Astrocyte of the cerebellum (primary cell): ENCODE measurements at regions of chr11 and their contacts with region 1.

Region 1: DNA sequence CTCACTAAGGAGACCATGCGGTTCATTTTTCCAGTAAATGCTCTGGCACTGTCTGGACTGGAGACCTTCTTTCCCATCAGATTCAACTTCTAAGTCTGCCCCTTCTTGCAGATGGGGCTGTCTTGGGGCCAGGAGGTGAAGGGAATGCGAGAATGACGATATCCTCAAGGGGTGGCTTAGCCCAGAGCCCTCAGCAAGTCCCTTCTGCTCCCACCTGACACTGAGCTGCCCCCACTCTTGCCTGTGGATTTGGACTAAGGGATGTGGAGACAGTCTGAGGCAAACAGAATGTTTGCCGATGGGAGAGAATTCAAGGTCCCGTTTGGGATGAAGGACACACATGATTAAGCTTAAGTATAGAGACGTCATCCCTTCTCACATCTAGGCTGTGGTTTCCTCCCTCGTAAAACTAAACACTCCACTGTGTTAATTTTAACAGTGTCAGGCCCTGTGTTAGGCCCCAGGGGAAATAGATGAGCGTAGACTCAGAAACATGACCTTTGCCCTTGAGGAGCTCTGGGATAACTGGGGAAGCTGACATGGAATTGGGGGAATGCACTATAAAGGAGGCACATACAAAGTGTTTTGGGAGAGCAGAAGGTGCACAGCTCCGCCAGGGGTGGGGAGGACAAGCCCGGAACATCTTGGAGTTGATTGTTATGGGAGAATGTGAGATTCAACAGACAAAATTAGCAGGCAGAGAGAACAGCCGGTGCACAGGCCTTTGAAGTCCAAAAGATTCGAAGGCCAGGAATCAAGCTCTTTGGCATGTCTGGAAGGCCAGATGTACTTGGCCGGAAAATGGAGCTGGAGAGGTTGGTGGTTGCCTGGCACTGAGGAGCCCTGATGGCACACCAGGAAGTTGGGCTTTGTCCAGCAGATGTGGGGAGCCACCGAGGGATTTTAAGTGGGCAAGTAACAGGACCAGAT is 71.6 kb downstream of the ST3GAL4 start:
- DNase-seq: no peak
- H3K4me3 ChIP-seq: no peak overlapping the region
- CTCF ChIP-seq: no peak

Region 2: DNA sequence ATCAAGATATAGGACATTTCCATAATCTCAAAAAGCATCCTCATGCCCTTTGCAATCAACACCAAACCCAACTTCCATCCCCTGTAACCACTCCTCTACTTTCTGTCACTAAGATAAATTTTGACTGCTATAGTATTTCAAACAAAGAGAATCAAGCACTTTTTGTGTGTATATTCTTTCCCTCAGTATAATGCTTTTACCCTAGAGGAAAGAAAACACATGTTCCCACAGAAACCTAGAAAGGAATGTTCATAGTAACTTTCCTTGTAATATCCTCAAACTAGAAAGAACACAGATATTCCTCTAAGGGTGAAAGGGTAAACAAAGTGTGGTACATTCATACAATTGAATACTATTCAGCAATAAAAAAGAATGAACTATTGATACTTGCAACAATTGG is 686.5 kb before region 1 on chr11:
- in situ Hi-C with region 1: no loop called
- DNase-seq: no peak
- H3K4me3 ChIP-seq: no peak overlapping the region
- CTCF ChIP-seq: no peak

Region 3: DNA sequence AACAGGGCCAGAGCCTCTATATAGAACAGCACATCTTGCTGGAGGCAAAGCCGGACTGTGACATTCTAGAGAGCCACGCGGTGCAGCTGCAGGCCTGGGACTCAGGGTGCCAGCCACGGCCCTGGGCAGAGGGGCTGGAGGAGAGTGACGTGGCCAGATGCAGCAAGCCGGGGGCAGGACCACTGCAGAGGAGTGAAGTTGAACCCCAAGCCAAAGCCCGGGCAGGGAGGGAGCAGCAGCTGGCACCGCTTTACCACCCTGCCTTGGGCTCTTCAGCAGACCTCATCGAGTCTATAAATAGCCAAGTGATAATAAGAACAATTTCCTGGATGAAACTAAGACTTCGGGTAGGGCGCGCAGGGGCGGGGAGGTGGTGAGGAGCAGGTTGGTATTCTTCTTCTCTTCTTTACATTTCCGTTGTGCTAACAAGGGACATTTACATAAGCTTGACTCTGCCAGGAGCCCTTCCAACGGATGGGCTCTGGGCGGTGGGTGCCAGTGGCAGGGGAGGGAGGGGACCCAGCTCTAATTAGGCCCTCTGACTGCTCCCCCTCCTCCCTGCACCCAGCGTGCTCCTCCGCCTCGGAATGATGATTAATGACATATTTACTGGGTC is 38.6 kb after region 1 on chr11:
- in situ Hi-C with region 1: loop called (anchors 5 kb)
- DNase-seq: no peak
- H3K4me3 ChIP-seq: no peak overlapping the region
- CTCF ChIP-seq: no peak